HAP-1 (cell line): ENCODE measurements at regions of chr7 and their contacts with region 1.

Region 1: DNA sequence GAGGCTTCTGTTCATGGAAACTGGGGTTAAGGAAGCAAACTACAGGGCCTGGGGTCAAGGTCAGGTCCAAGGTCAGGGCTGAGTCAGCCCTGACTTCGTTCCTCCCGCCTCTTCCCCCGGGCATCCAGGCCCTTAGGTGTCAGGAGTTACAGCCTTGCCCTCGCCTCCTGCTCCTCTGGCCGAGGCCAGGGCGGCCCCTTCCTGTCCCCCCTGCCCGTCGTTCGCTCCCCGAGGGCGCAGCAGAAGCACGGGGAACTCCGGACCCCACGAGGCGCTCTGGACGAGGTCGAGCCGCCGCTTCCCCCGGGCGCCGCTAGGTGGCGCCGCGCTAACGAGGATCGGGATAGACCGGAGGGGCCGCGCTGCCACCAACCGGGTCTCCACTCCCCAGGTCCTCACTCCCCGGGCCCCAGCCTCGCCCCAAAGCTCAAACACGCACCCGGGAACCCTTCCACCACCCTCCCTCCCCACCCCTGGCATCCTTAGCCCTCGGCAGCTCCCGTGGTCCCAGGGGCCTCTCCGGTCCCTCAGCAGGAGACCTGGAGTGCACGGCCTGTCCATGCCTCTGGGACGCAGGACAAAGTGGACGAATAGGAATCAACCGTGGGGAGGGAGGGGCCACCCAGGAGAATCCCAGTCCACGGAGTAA is 59.2 kb upstream of the MYL10 start:
- DNase-seq: peak; percentile 60 to 93
- H3K4me3 ChIP-seq: peak overlapping the region; percentile 17
- H3K4me1 ChIP-seq: peaks cover 5% of the 10 kb centered on the region; the same call in 1 of the 2 replicates
- H3K27me3 ChIP-seq: no peaks in the 10 kb centered on the region

Region 2: GRCh38 chr7:101330011-101330484 is 358.3 kb before region 1 on chr7:
- in situ Hi-C with region 1: no loop called
- DNase-seq: no peak
- H3K4me3 ChIP-seq: no peak overlapping the region
- H3K4me1 ChIP-seq: no peaks in the 10 kb centered on the region
- H3K27me3 ChIP-seq: no peaks in the 10 kb centered on the region

Region 3: GRCh38 chr7:101804967-101805366 is 116.7 kb after region 1 on chr7:
- in situ Hi-C with region 1: no loop called
- DNase-seq: peak in 1 of 2 experiments; percentile 34
- H3K4me3 ChIP-seq: no peak overlapping the region
- H3K4me1 ChIP-seq: peaks cover 9% of the 10 kb centered on the region; the same call in 1 of the 2 replicates
- H3K27me3 ChIP-seq: peaks cover 17% of the 10 kb centered on the region

Region 4: GRCh38 chr7:102236592-102237287 is 548.4 kb after region 1 on chr7:
- in situ Hi-C with region 1: loop called (anchors 10 kb)
- DNase-seq: peak; percentile 51 to 84
- H3K4me3 ChIP-seq: no peak overlapping the region
- H3K4me1 ChIP-seq: no peaks in the 10 kb centered on the region
- H3K27me3 ChIP-seq: no peaks in the 10 kb centered on the region

Region 5: DNA sequence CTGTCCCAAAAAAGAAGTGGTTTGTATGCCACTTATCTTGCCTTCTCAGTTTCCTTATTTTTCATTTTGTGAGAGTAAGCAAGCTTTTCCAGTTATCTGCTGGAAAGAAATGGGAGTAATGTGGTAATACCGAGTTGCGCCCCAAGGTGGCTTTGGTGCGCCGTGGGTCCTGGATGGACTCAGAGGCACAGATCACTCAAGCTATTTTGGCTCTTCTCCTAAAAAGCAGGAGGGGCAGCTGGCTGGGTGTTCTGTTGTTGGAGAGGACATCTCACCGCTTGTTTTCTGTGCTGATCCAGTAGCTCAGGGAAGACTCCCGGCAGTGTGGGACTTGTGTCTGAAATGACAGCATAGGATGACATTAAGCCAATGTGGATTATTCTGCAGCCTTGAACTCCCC is 724.2 kb after region 1 on chr7:
- in situ Hi-C with region 1: no loop called
- DNase-seq: peak in 1 of 2 experiments; percentile 48
- H3K4me3 ChIP-seq: no peak overlapping the region
- H3K4me1 ChIP-seq: no peaks in the 10 kb centered on the region
- H3K27me3 ChIP-seq: no peaks in the 10 kb centered on the region